ENCODE measurements at regions of chr21 and their contacts with region 1.

Region 1: GRCh38 chr21:31974454-31974985 is 101.7 kb downstream of the HUNK start:
- DNase-seq: peak; percentile 54
- H3K4me3 Mint-ChIP-seq: no peak overlapping the region
- H3K27ac Mint-ChIP-seq: no peak overlapping the region
- H3K4me1 Mint-ChIP-seq: peaks cover 5% of the 10 kb centered on the region
- H3K27me3 Mint-ChIP-seq: peaks cover 4% of the 10 kb centered on the region

Region 2: GRCh38 chr21:31888936-31889371 is 85.6 kb before region 1 on chr21:
- CTCF ChIA-PET with region 1: no interaction called
- POLR2A ChIA-PET with region 1: no interaction called
- intact Hi-C with region 1: loop called (anchors 10 kb)
- DNase-seq: no peak
- H3K4me3 Mint-ChIP-seq: no peak overlapping the region
- H3K27ac Mint-ChIP-seq: no peak overlapping the region
- H3K4me1 Mint-ChIP-seq: no peaks in the 10 kb centered on the region
- H3K27me3 Mint-ChIP-seq: peaks cover 2% of the 10 kb centered on the region

Region 3: GRCh38 chr21:32120230-32120629 is 145.7 kb after region 1 on chr21:
- CTCF ChIA-PET with region 1: no interaction called
- POLR2A ChIA-PET with region 1: no interaction called
- intact Hi-C with region 1: no loop called
- DNase-seq: no peak
- H3K4me3 Mint-ChIP-seq: no peak overlapping the region
- H3K27ac Mint-ChIP-seq: no peak overlapping the region
- H3K4me1 Mint-ChIP-seq: no peaks in the 10 kb centered on the region
- H3K27me3 Mint-ChIP-seq: peaks cover 2% of the 10 kb centered on the region

Measured in activated CD4-positive, alpha-beta memory T cell treated with anti-CD3 and anti-CD28 coated beads for 36 hours (primary cell).